Heart right ventricle (tissue), 16 donors: ENCODE measurements at regions of chr20 and their contacts with region 1.

Region 1: DNA sequence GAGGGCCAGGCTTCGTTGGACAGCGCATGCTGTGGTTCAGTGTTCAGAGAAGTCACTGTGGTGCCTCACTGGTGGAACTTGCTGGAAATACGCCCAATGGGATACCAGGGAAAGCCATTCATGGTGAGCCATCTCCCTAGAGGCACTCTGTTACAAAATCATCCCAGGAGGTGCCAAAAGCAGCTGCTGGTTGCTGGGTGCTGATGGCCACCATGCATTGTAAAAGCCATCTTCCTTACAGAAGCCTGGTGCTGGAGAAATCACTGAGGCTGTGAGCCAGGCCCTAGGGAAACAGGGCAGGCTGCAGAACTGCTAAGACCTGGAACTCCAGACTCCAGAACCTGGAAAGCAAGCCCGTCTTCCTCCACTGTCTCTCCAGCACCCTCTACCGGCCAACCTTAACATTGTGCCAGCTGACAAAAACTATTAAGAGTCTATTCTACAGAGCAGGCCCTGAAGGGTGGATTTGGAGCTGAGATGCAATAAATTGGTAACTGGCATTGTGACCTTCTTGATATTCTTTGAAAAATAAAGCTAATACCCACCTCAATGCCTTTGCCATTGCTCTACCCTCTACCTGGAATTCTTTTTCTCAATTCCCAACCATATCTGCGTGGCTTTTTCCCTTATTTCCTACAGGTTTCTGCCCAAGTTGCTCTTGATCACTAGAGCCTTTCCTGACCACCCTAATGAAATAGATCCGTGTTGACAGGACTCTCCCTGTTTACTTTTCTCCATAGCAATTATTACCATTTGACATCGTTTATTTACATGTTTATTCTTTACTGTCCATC is 18.5 kb downstream of the SNRPB start:
- DNase-seq: peak; percentile 50 to 75
- ATAC-seq: peak in 5 of 8 donors; percentile 55 to 77 (median 67)
- H3K4me3 ChIP-seq: no peak overlapping the region
- H3K27ac ChIP-seq: no peak overlapping the region
- H3K4me1 ChIP-seq: peaks cover 0 to 6% (median 0%) of the 10 kb centered on the region in 9 donors
- H3K27me3 ChIP-seq: no peaks in the 10 kb centered on the region
- CTCF ChIP-seq: peak; percentile 71 to 88 (median 84)

Region 2: GRCh38 chr20:1764136-1765033 is 687.8 kb before region 1 on chr20:
- intact Hi-C with region 1: loop called in 4 of 10 experiments (anchors 5 to 10 kb)
- DNase-seq: peak; percentile 67 to 75
- ATAC-seq: peak; percentile 75 to 94 (median 90)
- H3K4me3 ChIP-seq: no peak overlapping the region
- H3K27ac ChIP-seq: no peak overlapping the region
- H3K4me1 ChIP-seq: peaks cover 0 to 10% (median 3%) of the 10 kb centered on the region in 9 donors
- H3K27me3 ChIP-seq: peaks cover 0 to 5% (median 0%) of the 10 kb centered on the region in 7 donors
- CTCF ChIP-seq: peak; percentile 34 to 86 (median 74)

Region 3: DNA sequence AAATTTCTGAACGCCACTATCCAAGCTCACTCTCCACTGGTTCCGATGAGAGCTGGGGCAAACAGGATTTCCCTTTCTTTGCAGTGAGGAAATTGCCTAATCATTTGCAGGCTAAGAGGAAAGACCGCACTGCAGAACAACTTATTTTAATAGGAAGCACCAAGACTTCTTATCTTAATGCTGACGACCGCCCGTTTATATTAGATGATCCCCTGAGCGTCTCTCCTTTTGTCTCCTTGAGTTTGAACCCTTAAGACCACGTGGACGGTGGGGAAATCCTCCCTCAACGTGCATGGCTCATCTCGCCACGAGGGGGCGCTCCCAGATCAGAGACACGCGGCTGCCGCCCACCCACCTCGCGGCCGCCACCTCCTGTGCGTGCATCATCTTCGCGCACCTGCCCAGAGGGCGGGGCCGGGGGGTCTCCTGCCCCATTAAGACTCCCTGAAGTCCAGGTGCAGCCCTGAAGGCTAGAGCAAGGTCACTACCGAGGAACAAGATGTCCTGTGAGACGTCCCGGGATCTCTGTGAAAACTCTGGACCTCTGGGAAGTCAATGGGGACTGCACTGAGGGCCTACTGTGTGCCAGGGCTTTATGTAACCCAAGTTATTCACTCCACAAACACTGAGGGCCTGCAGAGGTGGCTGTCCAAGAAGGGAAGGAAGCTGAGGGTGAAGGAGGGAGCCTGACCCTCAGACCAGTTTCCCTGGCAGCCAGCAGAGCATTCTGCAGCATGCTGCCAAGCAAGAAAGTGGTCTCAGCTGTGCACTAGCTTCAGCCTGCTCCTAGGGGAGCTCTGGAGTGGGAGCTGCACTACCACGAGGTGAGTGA is 486.4 kb before region 1 on chr20:
- intact Hi-C with region 1: loop called in 8 of 10 experiments (anchors 5 to 10 kb)
- DNase-seq: peak; percentile 71 to 75
- ATAC-seq: peak; percentile 72 to 90 (median 80)
- H3K4me3 ChIP-seq: peak overlapping the region in 4 of 10 donors; percentile 5 to 22 (median 13)
- H3K27ac ChIP-seq: peak overlapping the region in 2 of 10 donors; percentile 16 to 69
- H3K4me1 ChIP-seq: peaks cover 0 to 26% (median 10%) of the 10 kb centered on the region in 9 donors
- H3K27me3 ChIP-seq: peaks cover 0 to 28% (median 6%) of the 10 kb centered on the region in 7 donors
- CTCF ChIP-seq: peak; percentile 81 to 97 (median 94)

Region 4: DNA sequence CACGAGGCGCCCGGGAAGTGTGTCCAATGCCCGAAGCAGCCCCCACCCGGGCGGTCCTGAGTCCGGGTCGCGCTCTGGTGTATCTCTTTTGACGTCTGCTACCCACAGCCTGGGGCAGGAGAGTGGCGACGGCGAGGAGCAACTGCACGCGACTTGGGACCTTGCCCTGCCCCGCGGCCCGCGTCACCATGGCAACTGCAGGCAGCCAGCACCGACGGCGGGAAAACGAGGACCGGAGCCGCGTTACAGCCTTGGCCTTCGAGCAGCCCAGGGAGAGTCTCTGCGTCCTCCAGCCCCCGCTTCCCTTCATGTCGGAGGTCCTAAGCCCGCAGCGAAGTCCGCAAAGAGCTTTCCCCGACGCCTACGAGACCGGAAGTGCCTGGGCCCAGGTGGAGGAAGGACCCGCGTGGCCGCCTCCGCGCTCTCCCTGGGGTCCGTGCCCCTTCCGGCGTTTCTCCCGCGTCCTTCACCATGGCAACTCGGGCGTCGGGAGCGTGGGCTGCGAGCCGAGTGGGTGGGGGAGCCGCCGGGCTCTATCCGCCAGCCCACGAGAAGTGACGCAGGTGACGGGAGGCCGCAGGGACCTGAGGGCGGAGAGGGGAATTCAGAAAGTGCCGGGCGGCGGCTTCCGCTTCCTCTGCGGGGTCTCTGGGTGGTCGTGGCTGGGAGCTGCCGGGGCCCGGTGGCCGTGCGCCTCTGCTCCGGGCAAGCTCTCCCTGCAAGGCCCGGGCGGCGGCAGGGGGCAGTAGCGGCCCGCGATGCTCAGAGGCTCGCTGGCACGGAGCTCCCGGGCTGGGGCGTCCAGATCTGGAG is 245.0 kb before region 1 on chr20:
- intact Hi-C with region 1: loop called in 9 of 10 experiments (anchors 2 to 10 kb)
- DNase-seq: peak; percentile 47 to 79
- ATAC-seq: peak; percentile 82 to 92 (median 87)
- H3K4me3 ChIP-seq: peak overlapping the region; percentile 26 to 68 (median 56)
- H3K27ac ChIP-seq: peak overlapping the region in 1 of 10 donors; percentile 46
- H3K4me1 ChIP-seq: peaks cover 0 to 33% (median 13%) of the 10 kb centered on the region in 9 donors
- H3K27me3 ChIP-seq: peaks cover 0 to 59% (median 37%) of the 10 kb centered on the region in 7 donors
- CTCF ChIP-seq: peak; percentile 51 to 89 (median 80)

Region 5: GRCh38 chr20:2364044-2364443 is 88.1 kb before region 1 on chr20:
- intact Hi-C with region 1: loop called in 1 of 10 experiments (anchors 10 kb)
- DNase-seq: no peak
- ATAC-seq: no peak
- H3K4me3 ChIP-seq: no peak overlapping the region
- H3K27ac ChIP-seq: no peak overlapping the region
- H3K4me1 ChIP-seq: no peaks in the 10 kb centered on the region
- H3K27me3 ChIP-seq: peaks cover 0 to 19% (median 5%) of the 10 kb centered on the region in 7 donors
- CTCF ChIP-seq: no peak